Lower leg skin (tissue), 4 donors: ENCODE measurements at regions of chr4 and their contacts with region 1.

Region 1: GRCh38 chr4:83124111-83124780 is 9.7 kb upstream of the PLAC8 start:
- DNase-seq: no peak
- H3K4me3 ChIP-seq: no peak overlapping the region
- CTCF ChIP-seq: no peak
- POLR2A ChIP-seq: no peak

Region 2: DNA sequence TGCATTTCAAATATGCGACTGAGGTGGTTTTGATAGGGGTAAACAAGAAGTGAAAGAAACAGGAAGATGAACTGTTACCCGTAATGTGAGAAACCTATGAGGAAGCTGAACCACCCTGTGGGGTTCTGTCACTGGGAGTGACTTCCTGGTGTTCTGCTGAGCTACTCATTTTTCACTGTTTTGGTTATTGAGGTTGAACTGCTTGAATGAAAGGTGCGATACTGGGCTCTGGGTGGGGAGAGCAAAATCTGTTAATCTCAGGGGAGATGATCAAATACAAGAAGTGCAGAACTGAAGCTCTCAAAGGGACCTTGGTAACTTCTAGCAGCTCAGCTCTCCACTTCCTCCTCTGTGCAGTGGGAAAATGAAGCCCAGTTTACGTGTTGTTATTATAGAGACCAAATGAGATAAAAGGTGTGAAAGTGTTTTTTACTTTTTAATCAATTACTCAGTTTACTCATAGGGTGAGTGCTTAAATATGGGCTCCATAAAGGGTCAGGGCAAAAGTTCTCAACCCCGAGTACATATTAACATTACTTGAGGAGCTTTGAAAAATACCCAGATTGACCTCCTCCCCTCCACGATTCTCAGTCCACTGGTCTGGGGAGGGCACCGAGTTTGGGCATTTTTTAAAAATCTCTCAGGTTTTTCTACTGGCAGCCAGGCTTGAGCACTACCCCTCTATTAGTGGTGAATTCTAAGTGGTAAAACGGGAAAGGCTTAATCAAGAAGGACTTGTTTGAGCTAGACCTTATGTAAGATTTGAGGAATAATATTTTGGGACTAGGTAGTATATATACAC is 93.7 kb after region 1 on chr4:
- intact Hi-C with region 1: loop called (anchors 10 kb)
- DNase-seq: no peak
- H3K4me3 ChIP-seq: no peak overlapping the region
- CTCF ChIP-seq: no peak
- POLR2A ChIP-seq: no peak

Region 3: GRCh38 chr4:84870398-84871163 is 1746.3 kb after region 1 on chr4:
- intact Hi-C with region 1: no loop called
- DNase-seq: no peak
- H3K4me3 ChIP-seq: no peak overlapping the region
- CTCF ChIP-seq: no peak
- POLR2A ChIP-seq: no peak